ENCODE measurements at regions of chr6 and their contacts with region 1.

Region 1: GRCh38 chr6:129598244-129599187 is 111.5 kb downstream of the ARHGAP18 start:
- DNase-seq: peak; percentile 49
- H3K4me3 ChIP-seq: no peak overlapping the region
- H3K27ac ChIP-seq: no peak overlapping the region
- H3K27me3 ChIP-seq: no peaks in the 10 kb centered on the region
- CTCF ChIP-seq: peak; percentile 73

Region 2: DNA sequence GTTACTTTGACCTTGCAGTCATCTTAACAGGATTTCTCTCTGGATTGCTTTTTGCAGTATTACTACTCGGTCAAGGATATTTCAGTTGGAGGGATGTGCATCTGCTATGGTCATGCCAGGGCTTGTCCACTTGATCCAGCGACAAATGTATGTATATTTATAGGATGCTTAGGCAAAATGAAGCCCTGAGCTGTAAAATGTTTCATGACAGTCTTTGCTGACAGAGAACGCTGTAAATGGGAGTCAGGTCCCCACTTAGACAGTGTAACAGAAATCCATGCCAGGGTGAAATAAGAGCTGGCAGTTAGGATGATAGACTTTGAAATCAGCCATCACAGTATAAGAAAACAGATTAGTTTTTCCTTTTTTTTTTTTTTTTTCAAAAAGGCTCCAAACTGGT is 451.6 kb before region 1 on chr6:
- CTCF ChIA-PET with region 1: no interaction called
- POLR2A ChIA-PET with region 1: no interaction called
- DNase-seq: no peak
- H3K4me3 ChIP-seq: no peak overlapping the region
- H3K27ac ChIP-seq: no peak overlapping the region
- H3K27me3 ChIP-seq: no peaks in the 10 kb centered on the region
- CTCF ChIP-seq: no peak

Region 3: GRCh38 chr6:129292836-129293235 is 305.7 kb before region 1 on chr6:
- CTCF ChIA-PET with region 1: no interaction called
- POLR2A ChIA-PET with region 1: no interaction called
- DNase-seq: no peak
- H3K4me3 ChIP-seq: no peak overlapping the region
- H3K27ac ChIP-seq: no peak overlapping the region
- H3K27me3 ChIP-seq: no peaks in the 10 kb centered on the region
- CTCF ChIP-seq: no peak

Region 4: GRCh38 chr6:129498950-129499842 is 99.3 kb before region 1 on chr6:
- CTCF ChIA-PET with region 1: interaction called, 39 read pairs
- POLR2A ChIA-PET with region 1: no interaction called
- DNase-seq: no peak
- H3K4me3 ChIP-seq: no peak overlapping the region
- H3K27ac ChIP-seq: no peak overlapping the region
- H3K27me3 ChIP-seq: no peaks in the 10 kb centered on the region
- CTCF ChIP-seq: peak; percentile 59

Region 5: GRCh38 chr6:129661536-129662405 is 63.3 kb after region 1 on chr6:
- CTCF ChIA-PET with region 1: interaction called, 29 read pairs
- POLR2A ChIA-PET with region 1: no interaction called
- DNase-seq: no peak
- H3K4me3 ChIP-seq: no peak overlapping the region
- H3K27ac ChIP-seq: no peak overlapping the region
- H3K27me3 ChIP-seq: no peaks in the 10 kb centered on the region
- CTCF ChIP-seq: no peak

Region 6: GRCh38 chr6:129730477-129731165 is 132.1 kb after region 1 on chr6:
- CTCF ChIA-PET with region 1: interaction called, 37 read pairs
- POLR2A ChIA-PET with region 1: no interaction called
- DNase-seq: no peak
- H3K4me3 ChIP-seq: no peak overlapping the region
- H3K27ac ChIP-seq: no peak overlapping the region
- H3K27me3 ChIP-seq: no peaks in the 10 kb centered on the region
- CTCF ChIP-seq: peak; percentile 37

Region 7: GRCh38 chr6:129774697-129775447 is 176.4 kb after region 1 on chr6:
- CTCF ChIA-PET with region 1: interaction called, 105 read pairs
- POLR2A ChIA-PET with region 1: no interaction called
- DNase-seq: peak; percentile 52
- H3K4me3 ChIP-seq: no peak overlapping the region; the same call in 1 of the 2 replicates
- H3K27ac ChIP-seq: no peak overlapping the region
- H3K27me3 ChIP-seq: no peaks in the 10 kb centered on the region
- CTCF ChIP-seq: peak; percentile 99

Region 8: DNA sequence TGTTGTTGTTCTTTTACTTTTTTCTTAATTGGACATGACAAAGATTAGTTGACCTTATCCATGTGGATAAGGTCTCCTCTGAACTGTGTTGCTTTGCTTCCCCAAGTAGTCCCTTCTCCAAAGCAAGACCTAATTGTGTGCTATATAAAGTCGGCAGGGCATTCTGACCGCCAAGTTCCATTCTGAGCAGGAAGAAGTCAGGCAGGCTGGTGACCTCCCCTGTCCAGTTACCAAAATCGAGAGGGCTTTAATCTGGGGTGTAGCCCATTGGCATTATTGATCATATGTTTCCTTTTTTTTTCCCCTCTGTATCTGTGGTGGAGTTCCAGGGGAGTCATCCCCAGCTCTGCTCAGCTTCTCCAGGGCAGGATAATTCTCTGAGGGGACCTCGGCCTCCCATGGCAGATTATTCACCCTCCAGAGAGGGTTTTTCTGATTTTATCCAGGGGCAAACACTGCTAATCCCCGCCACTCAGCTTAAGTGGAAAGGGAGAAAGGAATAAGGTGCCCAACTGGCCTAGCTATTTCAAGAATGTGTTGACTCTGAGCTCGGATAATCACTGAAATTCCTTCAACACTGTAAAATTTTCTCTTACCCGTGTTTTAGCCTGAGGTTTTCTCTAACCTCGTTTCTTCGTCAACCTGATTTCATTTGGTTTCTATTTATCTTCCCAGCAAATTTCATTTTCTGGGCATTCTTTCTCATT is 348.1 kb after region 1 on chr6:
- CTCF ChIA-PET with region 1: no interaction called
- POLR2A ChIA-PET with region 1: no interaction called
- DNase-seq: no peak
- H3K4me3 ChIP-seq: no peak overlapping the region
- H3K27ac ChIP-seq: no peak overlapping the region
- H3K27me3 ChIP-seq: no peaks in the 10 kb centered on the region
- CTCF ChIP-seq: no peak

Region 9: GRCh38 chr6:129981598-129981997 is 383.1 kb after region 1 on chr6:
- CTCF ChIA-PET with region 1: interaction called, 16 read pairs
- POLR2A ChIA-PET with region 1: no interaction called
- DNase-seq: no peak
- H3K4me3 ChIP-seq: no peak overlapping the region
- H3K27ac ChIP-seq: no peak overlapping the region
- H3K27me3 ChIP-seq: no peaks in the 10 kb centered on the region
- CTCF ChIP-seq: peak; percentile 29; the same call in 1 of the 2 replicates

Measured in AG04450 (cell line).